ENCODE measurements at regions of chr1 and their contacts with region 1.

Region 1: GRCh38 chr1:40625066-40625465 is 40.4 kb downstream of the RIMS3 start:
- DNase-seq: peak; percentile 12 to 36
- ATAC-seq: peak in 7 of 8 donors; percentile 38 to 87 (median 75)
- H3K4me3 ChIP-seq: no peak overlapping the region
- H3K27ac ChIP-seq: no peak overlapping the region
- H3K4me1 ChIP-seq: no peaks in the 10 kb centered on the region
- H3K27me3 ChIP-seq: peaks cover 0 to 7% (median 0%) of the 10 kb centered on the region in 7 donors
- CTCF ChIP-seq: peak in 7 of 9 donors; percentile 41 to 55 (median 51)

Region 2: DNA sequence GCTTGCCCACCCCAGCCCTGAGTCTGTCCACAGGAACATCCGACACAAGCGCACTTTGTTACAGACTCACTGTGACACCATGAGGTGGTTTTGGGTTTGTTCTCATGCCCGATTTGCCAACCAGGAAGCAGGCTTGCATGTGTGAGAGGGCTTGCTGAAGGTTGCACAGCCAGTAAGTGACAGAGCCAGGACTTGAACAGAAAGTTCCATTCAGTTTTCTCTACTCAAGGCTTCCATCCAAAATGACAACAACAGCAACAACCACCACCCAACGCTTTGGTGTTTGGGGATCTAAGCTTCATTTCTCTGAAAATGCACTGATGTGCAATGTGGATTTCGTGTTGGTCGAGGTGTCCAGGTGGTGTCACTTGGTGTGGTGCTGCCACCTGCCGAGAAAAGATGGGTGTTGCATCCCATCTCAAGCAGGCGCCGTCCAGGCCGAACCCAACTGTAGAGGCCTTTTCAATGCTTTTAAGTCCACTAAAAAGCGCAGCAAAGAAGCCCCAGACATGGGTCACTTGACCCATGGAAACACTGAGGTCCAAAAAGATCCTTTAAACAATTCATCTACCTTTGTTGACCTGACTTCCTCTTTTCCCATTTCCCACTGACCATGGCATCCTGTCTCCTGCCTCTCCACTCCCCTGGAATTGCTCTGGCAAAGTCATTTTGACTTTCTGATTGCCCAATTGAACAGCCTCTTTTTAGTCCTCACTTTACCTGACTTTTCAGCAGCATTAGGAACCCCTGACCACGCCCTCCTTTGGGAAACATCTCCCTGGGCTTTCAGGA is 224.9 kb after region 1 on chr1:
- intact Hi-C with region 1: loop called in 2 of 10 experiments (anchors 5 to 10 kb)
- DNase-seq: peak; percentile 63 to 64
- ATAC-seq: peak; percentile 79 to 92 (median 87)
- H3K4me3 ChIP-seq: no peak overlapping the region
- H3K27ac ChIP-seq: no peak overlapping the region
- H3K4me1 ChIP-seq: peaks cover 0 to 9% (median 0%) of the 10 kb centered on the region in 9 donors
- H3K27me3 ChIP-seq: no peaks in the 10 kb centered on the region
- CTCF ChIP-seq: peak; percentile 79 to 93 (median 90)

Region 3: GRCh38 chr1:40965529-40965928 is 340.5 kb after region 1 on chr1:
- intact Hi-C with region 1: loop called in 1 of 10 experiments (anchors 10 kb)
- DNase-seq: no peak
- ATAC-seq: no peak
- H3K4me3 ChIP-seq: no peak overlapping the region
- H3K27ac ChIP-seq: no peak overlapping the region
- H3K4me1 ChIP-seq: no peaks in the 10 kb centered on the region
- H3K27me3 ChIP-seq: no peaks in the 10 kb centered on the region
- CTCF ChIP-seq: no peak

Measured in heart right ventricle (tissue), 16 donors.